CD4-positive, alpha-beta T cell (primary cell): ENCODE measurements at regions of chr10 and their contacts with region 1.

Region 1: DNA sequence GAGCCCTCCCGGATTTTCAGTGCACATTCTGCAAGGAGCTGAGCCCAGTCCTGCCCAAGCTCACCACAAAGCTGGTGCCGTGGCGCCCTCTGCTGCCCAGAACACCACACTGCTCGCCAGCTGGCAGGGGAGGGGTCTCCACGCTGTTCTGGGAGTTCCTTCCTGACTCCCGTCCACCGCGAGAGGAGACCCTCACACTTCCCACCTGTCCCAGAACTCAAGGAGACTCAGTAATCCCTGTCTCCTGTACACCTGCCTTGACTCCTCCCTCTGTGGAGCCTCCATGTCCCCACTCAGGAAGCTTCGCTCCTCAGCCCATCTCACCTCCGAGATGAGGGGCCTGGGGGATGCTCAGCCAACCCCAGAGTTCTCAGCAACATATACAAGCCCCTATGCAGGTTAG is 11.3 kb downstream of the C10orf105 start:
- DNase-seq: peak; percentile 50 to 82 (median 63)
- ATAC-seq: peak; percentile 76
- H3K4me3 ChIP-seq: no peak overlapping the region
- H3K4me3 Mint-ChIP-seq: no peak overlapping the region
- H3K27ac ChIP-seq: no peak overlapping the region
- H3K27ac Mint-ChIP-seq: peak overlapping the region; percentile 5
- H3K4me1 ChIP-seq: peaks cover 48% of the 10 kb centered on the region
- H3K4me1 Mint-ChIP-seq: peaks cover 51% of the 10 kb centered on the region
- H3K27me3 ChIP-seq: no peaks in the 10 kb centered on the region
- H3K27me3 Mint-ChIP-seq: no peaks in the 10 kb centered on the region
- CTCF ChIP-seq: peak; percentile 85

Region 2: DNA sequence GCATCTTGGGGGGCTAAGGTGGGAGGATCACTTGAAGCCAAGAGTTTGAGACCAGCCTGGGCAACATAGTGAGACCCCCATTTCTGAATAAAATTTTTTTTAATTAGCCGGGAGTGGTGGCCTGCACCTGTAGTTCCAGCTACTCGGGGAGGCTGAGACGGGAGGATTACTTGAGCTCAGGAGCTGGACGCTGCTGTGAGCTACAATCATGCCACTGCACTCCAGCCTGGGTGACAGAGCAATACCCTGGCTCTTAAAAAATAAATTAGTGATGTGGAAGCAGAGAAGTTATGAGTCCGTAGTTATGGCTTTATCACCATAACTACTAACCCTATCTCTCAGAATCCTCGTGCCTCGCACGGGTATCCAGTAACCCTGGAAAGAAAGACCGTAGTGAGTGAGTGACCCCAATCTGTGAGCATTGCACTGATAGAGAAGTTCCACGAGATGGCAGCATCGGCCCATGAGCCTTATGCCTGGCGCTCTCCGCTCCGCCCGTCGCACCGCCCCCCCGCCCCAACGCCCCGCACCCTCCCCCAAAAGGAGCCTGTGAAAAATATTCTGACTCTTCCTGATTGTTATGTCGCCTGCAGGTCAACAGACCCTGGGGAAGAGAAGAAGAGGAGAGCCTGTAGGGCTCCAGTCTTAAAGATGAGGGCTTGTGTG is 394.1 kb before region 1 on chr10:
- CTCF ChIA-PET with region 1: interaction called, 11 read pairs
- POLR2A ChIA-PET with region 1: interaction called, 4 read pairs
- intact Hi-C with region 1: loop called (anchors 5 kb)
- DNase-seq: peak; percentile 33 to 84 (median 48)
- ATAC-seq: peak; percentile 50
- H3K4me3 ChIP-seq: no peak overlapping the region
- H3K4me3 Mint-ChIP-seq: no peak overlapping the region
- H3K27ac ChIP-seq: no peak overlapping the region
- H3K27ac Mint-ChIP-seq: no peak overlapping the region
- H3K4me1 ChIP-seq: peaks cover 14% of the 10 kb centered on the region
- H3K4me1 Mint-ChIP-seq: peaks cover 15% of the 10 kb centered on the region
- H3K27me3 ChIP-seq: peaks cover 0 to 2% of the 10 kb centered on the region in 2 experiments
- H3K27me3 Mint-ChIP-seq: peaks cover 11% of the 10 kb centered on the region
- CTCF ChIP-seq: peak; percentile 83

Region 3: DNA sequence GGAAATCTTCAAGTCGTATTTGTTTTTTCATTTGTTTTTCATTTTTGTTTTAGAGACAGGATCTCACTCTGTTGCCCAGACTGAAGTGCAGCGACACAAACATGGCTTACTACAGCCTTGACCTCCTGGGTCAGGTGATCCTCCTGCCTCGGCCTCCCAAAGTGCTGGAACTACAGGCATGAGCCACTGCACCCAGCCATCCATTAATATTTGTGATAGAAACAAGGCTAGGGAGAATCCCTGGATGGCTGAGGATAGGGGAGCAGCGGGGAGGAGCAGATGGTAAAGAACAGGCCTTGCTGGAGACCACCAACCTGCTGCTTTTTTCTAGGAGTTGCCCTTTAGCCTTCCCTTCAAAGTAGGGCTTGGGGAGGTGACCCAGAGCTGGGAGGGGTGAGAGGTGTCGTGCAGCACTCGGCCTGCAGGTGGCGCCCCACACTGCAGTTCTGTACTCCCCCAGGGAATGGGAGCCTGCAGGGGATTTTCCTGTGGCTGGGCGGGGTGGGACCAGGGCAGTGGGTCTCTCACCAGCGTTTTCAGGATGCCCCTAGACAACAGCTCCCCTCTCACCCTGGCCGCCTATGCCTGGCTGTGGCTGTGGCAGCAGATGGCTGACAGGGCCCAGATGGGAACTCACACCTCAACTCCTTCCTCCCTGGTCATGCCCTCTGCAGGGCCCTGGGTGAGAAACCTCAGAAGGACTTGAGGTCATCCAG is 324.2 kb before region 1 on chr10:
- CTCF ChIA-PET with region 1: interaction called, 6 read pairs
- POLR2A ChIA-PET with region 1: no interaction called
- intact Hi-C with region 1: loop called (anchors 2 kb)
- DNase-seq: peak; percentile 52 to 84 (median 67)
- ATAC-seq: peak; percentile 96
- H3K4me3 ChIP-seq: no peak overlapping the region
- H3K4me3 Mint-ChIP-seq: no peak overlapping the region
- H3K27ac ChIP-seq: no peak overlapping the region
- H3K27ac Mint-ChIP-seq: no peak overlapping the region
- H3K4me1 ChIP-seq: peaks cover 5% of the 10 kb centered on the region
- H3K4me1 Mint-ChIP-seq: no peaks in the 10 kb centered on the region
- H3K27me3 ChIP-seq: no peaks in the 10 kb centered on the region
- H3K27me3 Mint-ChIP-seq: no peaks in the 10 kb centered on the region
- CTCF ChIP-seq: peak; percentile 90

Region 4: DNA sequence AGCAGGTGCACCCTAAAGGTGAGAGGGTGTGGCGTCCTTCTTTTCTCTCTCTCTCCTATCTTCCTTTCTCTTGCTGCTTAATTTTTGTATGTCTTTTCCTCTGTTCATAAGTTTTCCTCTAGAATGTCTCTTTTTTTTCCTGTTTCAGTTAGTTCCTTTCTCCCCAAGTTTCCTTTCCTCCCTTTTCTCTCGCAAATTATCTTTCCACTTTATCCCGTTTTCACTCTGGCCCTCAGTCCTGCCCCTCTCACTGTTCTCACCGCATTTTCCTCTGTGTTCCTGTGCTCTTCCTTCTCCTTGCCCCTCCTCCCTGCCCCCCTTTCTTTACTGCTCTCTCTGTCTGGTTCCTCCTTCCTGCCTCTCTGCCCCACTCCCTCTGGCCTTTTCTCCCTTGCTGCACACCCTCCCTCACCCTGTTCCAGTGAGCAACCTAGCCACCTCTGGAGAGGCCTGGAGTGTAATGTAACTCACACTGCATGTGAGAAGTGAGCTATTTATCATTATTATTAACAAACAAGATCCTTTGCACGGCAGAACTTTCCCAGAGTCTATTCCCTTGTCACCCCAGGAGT is 147.2 kb before region 1 on chr10:
- CTCF ChIA-PET with region 1: no interaction called
- POLR2A ChIA-PET with region 1: no interaction called
- intact Hi-C with region 1: no loop called
- DNase-seq: no peak
- ATAC-seq: no peak
- H3K4me3 ChIP-seq: no peak overlapping the region
- H3K4me3 Mint-ChIP-seq: no peak overlapping the region
- H3K27ac ChIP-seq: no peak overlapping the region
- H3K27ac Mint-ChIP-seq: no peak overlapping the region
- H3K4me1 ChIP-seq: no peaks in the 10 kb centered on the region
- H3K4me1 Mint-ChIP-seq: no peaks in the 10 kb centered on the region
- H3K27me3 ChIP-seq: peaks cover 4 to 11% of the 10 kb centered on the region in 2 experiments
- H3K27me3 Mint-ChIP-seq: peaks cover 17% of the 10 kb centered on the region
- CTCF ChIP-seq: no peak

Region 5: GRCh38 chr10:71666639-71667386 is 41.5 kb before region 1 on chr10:
- CTCF ChIA-PET with region 1: no interaction called
- POLR2A ChIA-PET with region 1: no interaction called
- intact Hi-C with region 1: no loop called
- DNase-seq: peak in 3 of 14 experiments; percentile 5 to 59 (median 35)
- ATAC-seq: peak; percentile 11
- H3K4me3 ChIP-seq: no peak overlapping the region
- H3K4me3 Mint-ChIP-seq: no peak overlapping the region
- H3K27ac ChIP-seq: no peak overlapping the region
- H3K27ac Mint-ChIP-seq: peak overlapping the region; percentile 1
- H3K4me1 ChIP-seq: peaks cover 23% of the 10 kb centered on the region
- H3K4me1 Mint-ChIP-seq: peaks cover 13% of the 10 kb centered on the region
- H3K27me3 ChIP-seq: no peaks in the 10 kb centered on the region
- H3K27me3 Mint-ChIP-seq: no peaks in the 10 kb centered on the region
- CTCF ChIP-seq: no peak

Region 6: DNA sequence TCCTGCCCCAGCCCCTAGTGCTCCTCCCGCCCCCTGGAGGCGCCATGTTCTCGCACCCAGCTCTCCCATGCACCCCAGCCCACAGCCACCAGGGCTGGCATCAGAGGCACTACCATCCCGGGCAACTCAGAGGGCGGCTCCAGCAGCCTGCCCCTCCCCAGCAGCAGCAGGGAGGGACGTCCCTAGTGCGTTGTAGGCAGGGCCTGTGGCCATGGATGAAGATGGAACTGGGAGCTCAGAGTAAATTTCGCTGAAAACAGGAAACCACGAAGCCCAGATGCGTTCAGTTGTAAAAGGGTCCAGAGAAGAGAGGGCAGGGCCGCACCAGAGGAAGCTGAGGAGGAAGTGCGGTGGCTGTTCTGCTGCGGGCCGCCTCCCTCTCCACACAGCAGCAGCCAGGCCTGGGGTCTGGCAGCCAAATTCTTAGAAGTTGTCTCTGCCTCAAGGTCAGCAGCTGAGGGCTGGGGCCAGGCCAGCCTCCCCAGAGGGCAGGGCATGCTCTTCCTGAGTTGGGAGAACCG is 40.4 kb after region 1 on chr10:
- CTCF ChIA-PET with region 1: interaction called, 5 read pairs
- POLR2A ChIA-PET with region 1: interaction called, 11 read pairs
- intact Hi-C with region 1: no loop called
- DNase-seq: peak; percentile 59 to 94 (median 74)
- ATAC-seq: peak; percentile 92
- H3K4me3 ChIP-seq: no peak overlapping the region
- H3K4me3 Mint-ChIP-seq: peak overlapping the region; percentile 75
- H3K27ac ChIP-seq: peak overlapping the region; percentile 74 to 75
- H3K27ac Mint-ChIP-seq: peak overlapping the region; percentile 96
- H3K4me1 ChIP-seq: peaks cover 100% of the 10 kb centered on the region
- H3K4me1 Mint-ChIP-seq: peaks cover 97% of the 10 kb centered on the region
- H3K27me3 ChIP-seq: no peaks in the 10 kb centered on the region
- H3K27me3 Mint-ChIP-seq: no peaks in the 10 kb centered on the region
- CTCF ChIP-seq: peak; percentile 47

Region 7: DNA sequence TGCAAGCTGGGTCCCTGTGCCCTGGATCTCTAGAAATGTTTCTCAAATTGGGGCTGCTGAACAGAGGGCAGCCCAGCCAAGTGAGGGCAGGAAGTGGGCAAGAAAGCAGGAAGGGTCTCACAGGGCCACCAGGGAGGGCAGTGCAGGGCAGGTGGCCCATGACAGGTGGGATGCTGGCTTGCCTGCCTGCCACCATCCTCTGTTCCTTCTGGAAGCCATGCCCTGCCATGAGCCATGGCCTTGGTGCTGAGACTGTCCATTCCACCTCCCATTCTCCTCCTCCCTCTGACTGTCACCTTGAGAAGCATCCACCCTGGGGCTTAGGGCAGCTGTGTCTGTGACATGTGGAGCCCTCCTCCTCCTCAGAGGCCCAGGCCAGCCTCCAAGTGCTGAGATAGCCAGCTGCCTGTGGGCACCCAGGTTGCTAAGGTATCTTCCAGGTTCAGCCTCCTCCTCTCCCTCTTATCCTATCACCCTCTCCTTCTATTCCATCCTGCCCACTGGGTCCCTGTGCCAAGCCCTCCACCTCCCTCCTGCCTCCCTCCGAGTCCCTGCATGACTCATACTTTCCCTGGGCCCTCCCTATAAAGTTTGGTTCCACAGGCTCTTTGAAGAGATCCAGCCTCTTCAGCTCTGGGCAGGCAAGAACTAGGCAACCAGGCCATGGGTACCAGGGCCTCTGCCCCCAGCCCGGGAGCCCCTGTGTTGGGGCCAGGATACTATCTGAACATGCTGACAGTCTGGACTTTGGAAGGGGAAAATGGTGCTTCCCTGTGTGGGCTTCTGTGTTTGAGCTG is 63.7 kb after region 1 on chr10:
- CTCF ChIA-PET with region 1: interaction called, 18 read pairs
- POLR2A ChIA-PET with region 1: interaction called, 21 read pairs
- intact Hi-C with region 1: loop called in 1 of 2 experiments (anchors 5 kb)
- DNase-seq: peak in 3 of 14 experiments; percentile 44 to 54 (median 52)
- ATAC-seq: no peak
- H3K4me3 ChIP-seq: peak overlapping the region; percentile 90
- H3K4me3 Mint-ChIP-seq: peak overlapping the region; percentile 94
- H3K27ac ChIP-seq: peak overlapping the region; percentile 75 to 88
- H3K27ac Mint-ChIP-seq: peak overlapping the region; percentile 95
- H3K4me1 ChIP-seq: peaks cover 78% of the 10 kb centered on the region
- H3K4me1 Mint-ChIP-seq: peaks cover 88% of the 10 kb centered on the region
- H3K27me3 ChIP-seq: no peaks in the 10 kb centered on the region
- H3K27me3 Mint-ChIP-seq: no peaks in the 10 kb centered on the region
- CTCF ChIP-seq: no peak

Region 8: GRCh38 chr10:71850637-71851464 is 142.5 kb after region 1 on chr10 and contains the start of gene PSAP:
- CTCF ChIA-PET with region 1: no interaction called
- POLR2A ChIA-PET with region 1: no interaction called
- intact Hi-C with region 1: loop called in 1 of 2 experiments (anchors 1 kb)
- DNase-seq: peak; percentile 97 to 99 (median 98)
- ATAC-seq: peak; percentile 96
- H3K4me3 ChIP-seq: peak within 1 kb of the TSS; percentile 99
- H3K4me3 Mint-ChIP-seq: peak within 1 kb of the TSS; percentile 96
- H3K27ac ChIP-seq: peak within 1 kb of the TSS; percentile 47 to 85
- H3K27ac Mint-ChIP-seq: peak within 1 kb of the TSS; percentile 85
- H3K4me1 ChIP-seq: peaks cover 33% of the 10 kb centered on the region
- H3K4me1 Mint-ChIP-seq: peaks cover 51% of the 10 kb centered on the region
- H3K27me3 ChIP-seq: no peaks in the 10 kb centered on the region
- H3K27me3 Mint-ChIP-seq: no peaks in the 10 kb centered on the region
- CTCF ChIP-seq: no peak
- total RNA-seq, gene PSAP: 191 to 206 TPM